ENCODE measurements at regions of chr7 and their contacts with region 1.

Region 1: GRCh38 chr7:80859272-80859970 is 59.4 kb downstream of the SEMA3C start:
- DNase-seq: peak; percentile 41
- H3K4me3 ChIP-seq: no peak overlapping the region
- H3K27ac ChIP-seq: peak overlapping the region in 1 of 2 donors; percentile 35
- H3K4me1 ChIP-seq: peaks cover 6% of the 10 kb centered on the region
- H3K27me3 ChIP-seq: no peaks in the 10 kb centered on the region
- CTCF ChIP-seq: no peak
- POLR2A ChIP-seq: no peak

Region 2: DNA sequence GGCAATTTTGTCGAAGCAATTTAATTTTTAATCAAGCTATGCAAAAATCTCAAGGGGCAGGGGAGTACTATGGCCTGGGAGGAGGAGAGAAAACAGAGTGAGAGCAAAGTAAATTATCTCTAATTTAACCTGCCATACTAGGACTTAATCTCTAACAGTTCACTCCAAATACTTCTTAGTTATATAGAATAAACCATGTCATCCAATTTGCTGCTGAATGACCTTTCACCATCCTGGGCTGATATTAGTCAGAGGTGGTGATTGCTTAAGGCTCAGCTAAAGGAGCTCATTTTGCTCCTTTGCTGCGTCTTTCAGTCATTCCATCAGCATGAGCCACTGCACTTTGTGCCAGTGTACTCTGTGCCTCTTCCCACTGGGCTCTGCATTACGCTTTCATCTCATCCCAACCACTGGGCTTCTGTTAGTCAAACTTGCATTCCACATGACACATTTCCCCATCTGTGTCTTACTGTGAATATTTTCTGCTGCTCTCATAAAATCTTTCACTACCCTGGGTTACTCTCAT is 136.7 kb before region 1 on chr7:
- intact Hi-C with region 1: loop called (anchors 10 kb)
- DNase-seq: no peak
- H3K4me3 ChIP-seq: no peak overlapping the region
- H3K27ac ChIP-seq: no peak overlapping the region
- H3K4me1 ChIP-seq: no peaks in the 10 kb centered on the region
- H3K27me3 ChIP-seq: no peaks in the 10 kb centered on the region
- CTCF ChIP-seq: no peak
- POLR2A ChIP-seq: no peak

Region 3: DNA sequence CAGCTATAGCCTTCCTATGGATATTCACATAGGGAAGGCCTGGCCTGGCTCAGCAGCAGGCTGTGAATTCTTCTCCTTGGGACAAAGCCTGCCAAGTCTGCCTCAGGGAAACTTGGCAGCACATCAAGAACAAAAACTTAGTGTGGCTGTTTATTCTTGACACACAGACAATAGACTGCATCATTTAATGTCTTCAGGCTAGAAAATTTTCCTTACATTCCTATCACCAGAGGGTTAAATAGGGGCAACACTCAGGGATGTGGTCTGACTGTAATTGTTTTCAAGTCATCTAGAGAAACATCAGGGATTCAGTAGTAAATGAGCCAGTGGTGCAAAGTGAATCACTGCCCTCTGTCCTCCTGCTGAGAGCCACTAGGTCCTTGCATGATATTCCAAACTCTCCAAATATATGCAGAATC is 77.9 kb before region 1 on chr7:
- intact Hi-C with region 1: loop called (anchors 5 kb)
- DNase-seq: peak; percentile 86
- H3K4me3 ChIP-seq: no peak overlapping the region
- H3K27ac ChIP-seq: peak overlapping the region; percentile 42 to 60
- H3K4me1 ChIP-seq: peaks cover 4% of the 10 kb centered on the region
- H3K27me3 ChIP-seq: no peaks in the 10 kb centered on the region
- CTCF ChIP-seq: peak in 1 of 4 experiments; percentile 9
- POLR2A ChIP-seq: no peak